ENCODE measurements at regions of chr15 and their contacts with region 1.

Region 1: GRCh38 chr15:78170848-78171773 is 21.9 kb downstream of the IDH3A start:
- DNase-seq: peak; percentile 82
- ATAC-seq: peak; percentile 72
- H3K4me3 ChIP-seq: peak overlapping the region in 1 of 5 experiments; percentile 30
- H3K4me3 Mint-ChIP-seq: peak overlapping the region; percentile 81
- H3K27ac ChIP-seq: peak overlapping the region; percentile 50 to 70
- H3K27ac Mint-ChIP-seq: peak overlapping the region; percentile 95
- H3K4me1 ChIP-seq: peaks cover 83 to 84% of the 10 kb centered on the region in 2 donors
- H3K4me1 Mint-ChIP-seq: peaks cover 87% of the 10 kb centered on the region
- H3K27me3 ChIP-seq: no peaks in the 10 kb centered on the region
- H3K27me3 Mint-ChIP-seq: no peaks in the 10 kb centered on the region
- CTCF ChIP-seq: no peak

Region 2: DNA sequence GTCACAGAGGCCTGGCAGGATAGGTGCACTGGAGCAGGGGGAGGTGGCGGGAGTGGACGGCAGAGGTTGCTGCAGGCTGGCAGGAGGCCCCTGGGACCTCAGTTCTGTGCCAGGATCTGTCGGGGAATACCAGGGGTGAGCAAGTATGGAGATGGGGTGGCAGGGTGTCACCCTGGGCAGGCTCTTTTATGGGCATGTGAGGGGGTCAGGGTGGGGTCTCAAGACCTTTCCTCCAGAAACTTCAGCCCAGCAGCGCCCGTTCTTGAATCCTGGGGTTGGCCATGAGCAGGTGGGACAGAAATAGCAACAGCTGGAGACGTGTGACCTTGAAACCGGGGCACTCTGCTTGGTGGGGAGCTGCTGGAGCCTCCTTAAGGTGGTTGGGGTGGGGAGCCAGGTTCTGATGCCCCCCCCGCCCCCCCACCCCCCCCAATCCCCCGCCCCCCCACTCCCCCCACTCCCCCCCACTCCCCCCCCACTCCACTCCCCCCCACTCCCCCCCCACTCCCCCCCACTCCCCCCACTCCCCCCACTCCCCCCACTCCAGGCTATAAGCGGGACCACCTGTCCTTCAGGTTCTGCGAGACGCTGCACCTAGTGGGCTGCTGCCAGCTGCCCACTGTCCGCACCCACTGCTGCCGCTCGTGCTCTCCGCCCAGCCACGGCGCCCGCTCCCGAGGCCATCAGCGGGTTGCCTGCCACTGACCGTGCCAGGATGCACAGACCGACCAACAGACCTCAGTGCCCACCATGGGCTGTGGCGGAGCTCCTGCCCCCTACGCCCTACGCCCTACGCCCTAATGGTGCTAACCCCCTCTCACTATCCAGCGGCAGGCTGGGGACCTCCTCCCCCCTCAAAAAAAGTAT is 178.5 kb before region 1 on chr15:
- CTCF ChIA-PET with region 1: no interaction called
- POLR2A ChIA-PET with region 1: no interaction called
- intact Hi-C with region 1: loop called (anchors 1 kb)
- DNase-seq: no peak
- ATAC-seq: no peak
- H3K4me3 ChIP-seq: no peak overlapping the region
- H3K4me3 Mint-ChIP-seq: no peak overlapping the region
- H3K27ac ChIP-seq: no peak overlapping the region
- H3K27ac Mint-ChIP-seq: peak overlapping the region; percentile 61
- H3K4me1 ChIP-seq: peaks cover 32 to 33% of the 10 kb centered on the region in 2 donors
- H3K4me1 Mint-ChIP-seq: peaks cover 41% of the 10 kb centered on the region
- H3K27me3 ChIP-seq: no peaks in the 10 kb centered on the region
- H3K27me3 Mint-ChIP-seq: no peaks in the 10 kb centered on the region
- CTCF ChIP-seq: no peak

Region 3: DNA sequence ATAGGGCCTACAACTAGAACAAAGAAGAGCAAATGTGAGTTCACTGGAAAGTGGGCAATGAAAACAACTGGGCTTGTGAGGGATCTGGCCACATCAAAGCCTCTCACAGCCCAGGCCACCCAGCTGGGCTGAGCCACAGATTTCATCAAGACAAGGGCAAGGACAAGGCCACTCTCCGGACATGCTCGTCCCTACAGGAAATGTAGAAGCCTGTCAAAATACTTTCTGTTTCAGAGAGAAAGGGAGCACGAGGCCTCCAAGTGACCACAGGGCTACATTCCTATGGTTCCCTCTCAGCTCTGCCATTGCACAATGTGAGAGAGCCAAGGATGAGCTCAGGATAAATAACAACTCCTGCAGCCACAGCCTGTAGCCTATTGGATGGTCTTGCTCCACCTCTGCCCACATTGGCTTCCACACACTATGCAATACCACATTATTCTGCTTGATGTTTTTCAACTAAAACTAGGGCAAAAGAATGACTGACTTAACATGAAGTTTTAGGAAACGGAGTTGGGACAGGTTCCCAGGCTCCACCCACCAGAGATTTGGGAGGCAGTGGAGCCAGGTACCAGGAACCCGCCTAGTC is 105.7 kb before region 1 on chr15:
- CTCF ChIA-PET with region 1: no interaction called
- POLR2A ChIA-PET with region 1: no interaction called
- intact Hi-C with region 1: no loop called
- DNase-seq: no peak
- ATAC-seq: no peak
- H3K4me3 ChIP-seq: no peak overlapping the region
- H3K4me3 Mint-ChIP-seq: peak overlapping the region; percentile 52
- H3K27ac ChIP-seq: no peak overlapping the region
- H3K27ac Mint-ChIP-seq: no peak overlapping the region
- H3K4me1 ChIP-seq: peaks cover 61 to 70% of the 10 kb centered on the region in 2 donors
- H3K4me1 Mint-ChIP-seq: peaks cover 12% of the 10 kb centered on the region
- H3K27me3 ChIP-seq: peaks cover 0 to 8% (median 0%) of the 10 kb centered on the region in 4 experiments
- H3K27me3 Mint-ChIP-seq: no peaks in the 10 kb centered on the region
- CTCF ChIP-seq: no peak

Region 4: DNA sequence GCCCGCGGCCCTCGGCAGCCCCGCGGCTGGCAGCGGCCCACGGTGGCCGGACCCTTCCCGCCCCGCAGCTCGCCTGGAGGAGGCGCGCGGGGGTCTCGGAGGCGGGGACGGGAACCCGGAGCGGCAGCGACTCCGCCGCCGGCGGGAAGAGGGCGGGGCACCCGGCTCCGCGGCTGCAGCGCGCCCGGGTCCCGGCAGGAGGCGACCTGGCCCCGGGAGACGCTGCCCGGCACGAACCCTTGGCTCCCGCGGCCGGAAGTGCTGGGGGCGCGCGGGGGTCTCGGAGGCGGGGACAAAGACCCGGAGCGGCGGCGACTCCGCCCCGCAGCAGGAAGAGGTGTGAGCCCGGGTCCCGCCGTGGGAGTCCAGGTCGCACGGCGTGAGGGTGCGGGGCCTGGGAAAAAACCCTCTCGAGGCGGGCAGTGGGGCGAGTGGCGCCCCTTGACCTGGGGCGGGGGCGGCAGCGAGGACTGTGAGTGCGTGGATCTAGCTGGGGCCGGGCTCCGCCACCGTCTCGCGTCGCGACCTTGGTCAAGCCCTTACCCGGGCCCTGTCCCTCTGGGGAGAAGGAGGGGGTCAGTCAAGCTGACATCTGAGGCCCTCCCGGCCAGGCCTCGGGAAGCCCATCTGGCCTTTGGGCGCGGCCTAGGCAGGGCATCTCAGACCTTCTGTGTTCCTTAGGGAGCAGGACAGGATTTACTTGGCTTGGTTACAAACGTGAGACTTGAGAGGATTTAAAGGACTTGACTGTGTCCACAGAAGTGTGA is 39.6 kb before region 1 on chr15 and contains the start of gene CIB2:
- CTCF ChIA-PET with region 1: interaction called, 37 read pairs
- POLR2A ChIA-PET with region 1: interaction called, 7 read pairs
- intact Hi-C with region 1: loop called (anchors 2 kb)
- DNase-seq: peak; percentile 86
- ATAC-seq: peak; percentile 94
- H3K4me3 ChIP-seq: peak within 1 kb of the TSS; percentile 43 to 77 (median 72)
- H3K4me3 Mint-ChIP-seq: peak within 1 kb of the TSS; percentile 89
- H3K27ac ChIP-seq: peak within 1 kb of the TSS; percentile 69 to 86
- H3K27ac Mint-ChIP-seq: peak within 1 kb of the TSS; percentile 88
- H3K4me1 ChIP-seq: peaks cover 12 to 14% of the 10 kb centered on the region in 2 donors
- H3K4me1 Mint-ChIP-seq: peaks cover 14% of the 10 kb centered on the region
- H3K27me3 ChIP-seq: no peaks in the 10 kb centered on the region
- H3K27me3 Mint-ChIP-seq: no peaks in the 10 kb centered on the region
- CTCF ChIP-seq: peak; percentile 83
- total RNA-seq, gene CIB2: 3.2 and 3.8 TPM in 2 replicates

Region 5: GRCh38 chr15:78149068-78149804 is 21.9 kb before region 1 on chr15 and contains the start of gene IDH3A:
- CTCF ChIA-PET with region 1: interaction called, 5 read pairs
- POLR2A ChIA-PET with region 1: interaction called, 5 read pairs
- intact Hi-C with region 1: loop called (anchors 1 kb)
- DNase-seq: peak; percentile 99
- ATAC-seq: peak; percentile 97
- H3K4me3 ChIP-seq: peak within 1 kb of the TSS; percentile 63 to 93 (median 81)
- H3K4me3 Mint-ChIP-seq: peak within 1 kb of the TSS; percentile 98
- H3K27ac ChIP-seq: peak within 1 kb of the TSS; percentile 32 to 81
- H3K27ac Mint-ChIP-seq: peak within 1 kb of the TSS; percentile 93
- H3K4me1 ChIP-seq: peaks cover 20 to 25% of the 10 kb centered on the region in 2 donors
- H3K4me1 Mint-ChIP-seq: peaks cover 41% of the 10 kb centered on the region
- H3K27me3 ChIP-seq: no peaks in the 10 kb centered on the region
- H3K27me3 Mint-ChIP-seq: no peaks in the 10 kb centered on the region
- CTCF ChIP-seq: no peak
- total RNA-seq, gene IDH3A: 64.5 and 71.7 TPM in 2 replicates

Measured in B cell (primary cell).